Sigmoid colon (tissue), 7 donors: ENCODE measurements at regions of chr17 and their contacts with region 1.

Region 1: DNA sequence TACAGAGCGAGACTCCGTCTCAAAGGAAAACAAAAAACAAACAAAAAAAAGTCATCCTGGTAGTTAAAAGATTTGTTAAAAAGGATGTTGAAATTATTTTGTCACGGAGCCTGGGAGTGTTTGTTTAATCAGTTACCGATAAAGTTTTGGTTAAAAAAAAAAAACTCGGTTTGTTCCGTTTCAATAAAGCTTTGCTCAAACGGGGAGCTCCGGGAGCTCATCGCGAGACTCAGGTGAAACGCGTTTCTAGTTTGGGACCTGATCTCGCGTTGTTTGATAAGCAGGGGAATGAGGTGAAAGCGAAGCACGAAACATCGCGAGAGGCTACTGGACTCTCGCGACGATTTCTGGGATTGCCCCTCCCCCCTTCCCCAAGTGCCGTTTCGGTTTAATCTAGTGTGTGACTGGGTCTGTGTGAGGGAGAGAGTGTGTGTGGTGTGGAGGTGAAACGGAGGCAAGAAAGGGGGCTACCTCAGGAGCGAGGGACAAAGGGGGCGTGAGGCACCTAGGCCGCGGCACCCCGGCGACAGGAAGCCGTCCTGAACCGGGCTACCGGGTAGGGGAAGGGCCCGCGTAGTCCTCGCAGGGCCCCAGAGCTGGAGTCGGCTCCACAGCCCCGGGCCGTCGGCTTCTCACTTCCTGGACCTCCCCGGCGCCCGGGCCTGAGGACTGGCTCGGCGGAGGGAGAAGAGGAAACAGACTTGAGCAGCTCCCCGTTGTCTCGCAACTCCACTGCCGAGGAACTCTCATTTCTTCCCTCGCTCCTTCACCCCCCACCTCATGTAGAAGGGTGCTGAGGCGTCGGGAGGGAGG is at the start of gene CDK12:
- DNase-seq: peak; percentile 99
- H3K4me3 ChIP-seq: peak within 1 kb of the TSS; percentile 67 to 92 (median 80)
- H3K27ac ChIP-seq: peak within 1 kb of the TSS; percentile 92 to 99 (median 96)
- H3K4me1 ChIP-seq: peaks cover 0 to 39% (median 30%) of the 10 kb centered on the region in 4 donors
- H3K27me3 ChIP-seq: no peaks in the 10 kb centered on the region
- CTCF ChIP-seq: no peak
- EP300 ChIP-seq: peak in 1 of 4 donors; percentile 24
- POLR2A ChIP-seq: peak; percentile 87 to 90
- total RNA-seq, gene CDK12: 24.3 to 46.0 (median 32.7) TPM

Region 2: DNA sequence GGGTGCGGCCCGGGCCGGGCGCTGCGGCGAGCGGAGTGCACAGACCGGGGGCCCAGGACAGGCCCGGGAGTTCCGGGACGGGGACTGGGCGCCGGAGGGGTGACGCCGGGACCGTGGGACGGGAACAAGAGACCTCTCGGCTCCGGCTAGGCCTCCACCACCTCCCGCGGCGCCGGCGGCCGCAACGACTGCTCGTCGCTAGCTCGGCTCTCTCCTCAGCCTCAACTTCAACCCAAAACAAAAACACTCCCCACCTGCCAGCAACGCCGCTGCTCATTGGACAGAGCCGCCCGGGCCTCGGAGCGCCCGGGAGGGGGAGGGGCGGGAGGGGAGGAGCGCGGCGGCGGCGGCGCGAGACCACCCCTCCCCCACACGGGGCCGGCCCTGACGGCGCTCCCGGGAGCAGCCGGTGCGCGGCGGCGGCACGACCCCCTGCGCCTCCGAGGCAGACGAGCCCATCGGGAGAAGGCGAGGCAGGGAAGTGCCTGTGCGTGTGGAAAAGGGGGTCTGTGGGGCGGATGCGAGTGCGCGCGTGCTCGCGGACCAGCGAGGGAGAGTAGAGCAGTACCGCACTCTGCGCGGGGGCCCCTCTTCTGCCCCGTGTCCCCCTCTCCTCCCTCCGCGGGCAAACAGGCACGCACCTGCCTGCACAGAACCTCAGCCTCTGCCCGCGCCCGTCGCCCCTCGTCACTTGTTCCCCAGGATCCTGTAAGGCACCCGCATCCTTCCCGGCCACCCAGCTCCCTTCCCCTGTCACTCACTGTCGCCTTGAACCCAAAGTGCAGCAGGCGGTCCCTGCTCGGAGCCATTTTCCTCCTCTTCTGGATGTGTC is 59.7 kb before region 1 on chr17 and contains the start of gene FBXL20:
- intact Hi-C with region 1: loop called (anchors 2 kb)
- DNase-seq: peak; percentile 96
- H3K4me3 ChIP-seq: peak within 1 kb of the TSS; percentile 78 to 98 (median 94)
- H3K27ac ChIP-seq: peak within 1 kb of the TSS; percentile 90 to 94 (median 91)
- H3K4me1 ChIP-seq: peaks cover 0 to 30% (median 22%) of the 10 kb centered on the region in 4 donors
- H3K27me3 ChIP-seq: no peaks in the 10 kb centered on the region
- CTCF ChIP-seq: no peak
- EP300 ChIP-seq: no peak
- POLR2A ChIP-seq: peak; percentile 65 to 77
- total RNA-seq, gene FBXL20: 17.0 to 26.0 (median 20.0) TPM

Region 3: DNA sequence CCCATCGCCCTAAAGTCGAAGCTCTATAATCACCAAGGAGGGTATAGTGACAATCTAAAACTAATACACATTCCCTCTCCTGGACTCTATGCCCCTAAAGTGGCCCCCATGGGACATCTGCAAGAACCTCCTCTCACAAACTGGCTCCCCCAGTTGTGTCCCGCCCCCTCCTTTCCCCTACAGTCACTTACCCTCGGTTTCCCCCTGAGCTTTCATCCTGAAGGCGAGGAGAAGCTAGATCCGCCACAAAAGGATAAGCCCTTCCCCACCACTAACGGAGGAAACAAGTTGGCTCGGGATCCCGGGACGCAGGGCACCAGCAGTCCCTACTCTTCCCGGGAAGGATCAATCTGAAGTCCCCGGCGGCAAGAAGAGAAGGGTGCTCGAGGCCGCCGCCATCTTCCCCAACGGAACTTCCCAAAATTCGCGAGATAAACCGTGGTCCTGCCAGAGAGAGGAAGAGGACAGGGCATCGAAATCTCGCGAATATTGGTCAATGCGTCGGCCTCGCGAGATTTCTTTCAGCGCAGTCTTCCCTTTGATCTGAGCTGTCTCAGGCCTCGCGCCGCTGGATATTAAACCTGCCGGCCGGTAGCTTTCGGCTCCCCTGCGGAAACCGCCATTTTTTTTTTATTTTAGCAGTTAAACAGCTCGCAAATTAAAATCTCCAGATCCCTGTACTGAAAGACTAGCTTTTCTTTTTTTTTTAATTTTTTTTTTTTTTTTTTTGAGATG is 10.3 kb before region 1 on chr17 and contains the start of gene MED1:
- intact Hi-C with region 1: loop called (anchors 1 kb)
- DNase-seq: peak; percentile 97
- H3K4me3 ChIP-seq: peak within 1 kb of the TSS; percentile 61 to 92 (median 74)
- H3K27ac ChIP-seq: peak within 1 kb of the TSS; percentile 81 to 90 (median 84)
- H3K4me1 ChIP-seq: peaks cover 0 to 19% (median 16%) of the 10 kb centered on the region in 4 donors
- H3K27me3 ChIP-seq: no peaks in the 10 kb centered on the region
- CTCF ChIP-seq: no peak
- EP300 ChIP-seq: no peak
- POLR2A ChIP-seq: peak; percentile 34 to 38
- total RNA-seq, gene MED1: 16.8 to 22.5 (median 20.4) TPM